ENCODE measurements at regions of chr4 and their contacts with region 1.

Region 1: DNA sequence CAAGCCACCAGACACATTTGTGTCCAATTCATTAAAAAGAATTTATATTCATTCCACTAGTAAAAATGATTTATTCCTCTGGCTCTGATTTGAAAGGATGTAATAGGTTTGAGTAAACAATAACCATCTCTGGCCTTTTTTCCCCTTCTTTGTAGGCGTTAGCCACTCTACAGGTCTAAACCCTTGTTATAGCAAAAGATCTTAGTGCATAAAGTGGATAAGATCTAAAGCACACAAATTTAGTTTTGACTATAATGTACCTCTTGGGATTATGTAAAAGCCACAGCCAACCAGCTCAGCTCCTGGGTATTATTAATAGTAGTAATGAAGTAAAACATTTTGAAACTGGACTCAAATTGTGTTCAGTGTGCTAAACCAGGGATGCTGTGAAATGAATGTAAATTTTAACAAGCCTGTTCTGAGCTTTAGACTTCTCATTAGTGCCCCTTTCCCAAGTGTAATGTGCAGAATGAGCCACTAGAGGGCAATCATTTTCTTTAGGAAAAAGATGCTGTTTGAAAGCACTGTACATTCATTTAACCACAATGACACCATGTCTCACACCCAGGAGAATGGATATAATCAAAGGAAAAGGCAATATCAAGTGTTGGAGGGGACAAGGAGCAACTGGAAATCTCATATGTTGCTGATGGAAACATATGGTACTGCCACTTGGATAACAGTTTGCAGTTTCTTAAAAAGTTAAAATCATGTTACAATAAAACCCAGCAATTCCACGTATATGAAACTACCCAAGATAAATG is 69.7 kb downstream of the KLHL8 start:
- DNase-seq: peak in 2 of 4 donors; percentile 59 to 72
- ATAC-seq: peak; percentile 96
- H3K4me3 ChIP-seq: no peak overlapping the region
- H3K27ac ChIP-seq: no peak overlapping the region
- H3K4me1 ChIP-seq: no peaks in the 10 kb centered on the region
- H3K27me3 ChIP-seq: no peaks in the 10 kb centered on the region
- CTCF ChIP-seq: peak; percentile 90 to 94

Region 2: DNA sequence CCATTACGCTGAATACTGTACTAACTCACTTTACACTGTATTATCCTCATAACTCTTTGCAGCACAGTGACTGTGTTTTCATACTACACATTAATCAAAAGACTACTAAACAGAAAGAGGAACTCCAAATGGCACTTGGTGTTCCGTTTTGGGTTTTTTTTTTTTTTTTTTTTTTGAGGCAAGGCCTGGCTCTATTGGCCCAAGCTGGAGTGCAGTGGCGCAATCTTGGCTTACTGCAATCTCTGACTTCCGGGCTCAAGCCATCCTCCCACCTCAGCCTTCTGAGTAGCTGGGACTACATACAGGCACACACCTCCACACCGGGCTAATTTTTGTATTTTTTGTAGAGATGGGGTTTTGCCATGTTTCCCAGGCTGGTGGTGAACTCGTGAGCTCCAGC is 59.0 kb after region 1 on chr4:
- intact Hi-C with region 1: loop called in 1 of 2 experiments (anchors 10 kb)
- DNase-seq: peak in 2 of 4 donors; percentile 79 to 81
- ATAC-seq: peak; percentile 73
- H3K4me3 ChIP-seq: peak overlapping the region in 1 of 2 donors; percentile 7
- H3K27ac ChIP-seq: peak overlapping the region in 1 of 2 donors; percentile 64
- H3K4me1 ChIP-seq: peaks cover 0 to 41% of the 10 kb centered on the region in 2 donors
- H3K27me3 ChIP-seq: no peaks in the 10 kb centered on the region
- CTCF ChIP-seq: no peak

Region 3: GRCh38 chr4:87235020-87235671 is 84.5 kb after region 1 on chr4:
- intact Hi-C with region 1: loop called in 1 of 2 experiments (anchors 5 kb)
- DNase-seq: no peak
- ATAC-seq: peak; percentile 33
- H3K4me3 ChIP-seq: peak overlapping the region in 1 of 2 donors; percentile 38
- H3K27ac ChIP-seq: no peak overlapping the region
- H3K4me1 ChIP-seq: peaks cover 0 to 4% of the 10 kb centered on the region in 2 donors
- H3K27me3 ChIP-seq: no peaks in the 10 kb centered on the region
- CTCF ChIP-seq: no peak